Prostate gland (tissue), 2 donors: ENCODE measurements at regions of chr6 and their contacts with region 1.

Region 1: GRCh38 chr6:42260972-42261371 is 43.3 kb upstream of the MRPS10 start:
- DNase-seq: no peak
- H3K4me3 ChIP-seq: no peak overlapping the region
- H3K27ac ChIP-seq: peak overlapping the region; percentile 6 to 62
- H3K4me1 ChIP-seq: no peaks in the 10 kb centered on the region
- H3K27me3 ChIP-seq: no peaks in the 10 kb centered on the region
- CTCF ChIP-seq: peak; percentile 39 to 64 (median 48)
- POLR2A ChIP-seq: no peak

Region 2: DNA sequence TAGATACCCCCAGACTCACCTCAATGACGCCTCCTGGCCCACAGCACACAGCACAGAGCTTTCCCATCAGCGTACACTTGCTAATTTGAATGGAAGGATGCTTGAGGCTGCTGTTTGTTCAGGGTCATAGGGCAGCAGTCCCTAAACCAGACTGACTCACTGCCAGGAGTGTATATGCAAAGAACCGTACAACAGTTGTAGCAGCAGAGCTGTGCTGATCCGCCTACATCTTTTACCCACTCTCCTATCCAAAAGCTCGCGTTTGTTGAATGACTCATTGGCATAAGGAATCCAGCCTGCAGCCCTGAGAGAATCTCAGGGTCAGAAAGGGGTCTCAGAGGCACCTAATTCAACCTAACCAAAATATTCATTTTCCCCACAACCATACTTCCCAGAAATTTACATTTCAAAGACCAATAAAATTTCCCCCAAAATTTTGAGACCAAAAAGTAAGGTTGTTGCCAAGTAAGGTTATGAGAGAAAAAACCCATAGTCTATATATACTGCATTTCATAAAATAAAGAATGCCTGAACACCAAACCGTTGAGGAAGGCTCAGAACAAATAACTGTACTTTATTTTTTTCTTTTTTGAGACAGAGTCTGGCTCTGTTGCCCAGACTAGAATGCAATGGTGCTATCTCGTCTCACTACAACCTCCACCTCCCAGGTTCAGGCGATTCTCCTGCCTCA is 284.0 kb before region 1 on chr6:
- intact Hi-C with region 1: no loop called
- DNase-seq: no peak
- H3K4me3 ChIP-seq: no peak overlapping the region
- H3K27ac ChIP-seq: no peak overlapping the region
- H3K4me1 ChIP-seq: no peaks in the 10 kb centered on the region
- H3K27me3 ChIP-seq: no peaks in the 10 kb centered on the region
- CTCF ChIP-seq: no peak
- POLR2A ChIP-seq: no peak

Region 3: DNA sequence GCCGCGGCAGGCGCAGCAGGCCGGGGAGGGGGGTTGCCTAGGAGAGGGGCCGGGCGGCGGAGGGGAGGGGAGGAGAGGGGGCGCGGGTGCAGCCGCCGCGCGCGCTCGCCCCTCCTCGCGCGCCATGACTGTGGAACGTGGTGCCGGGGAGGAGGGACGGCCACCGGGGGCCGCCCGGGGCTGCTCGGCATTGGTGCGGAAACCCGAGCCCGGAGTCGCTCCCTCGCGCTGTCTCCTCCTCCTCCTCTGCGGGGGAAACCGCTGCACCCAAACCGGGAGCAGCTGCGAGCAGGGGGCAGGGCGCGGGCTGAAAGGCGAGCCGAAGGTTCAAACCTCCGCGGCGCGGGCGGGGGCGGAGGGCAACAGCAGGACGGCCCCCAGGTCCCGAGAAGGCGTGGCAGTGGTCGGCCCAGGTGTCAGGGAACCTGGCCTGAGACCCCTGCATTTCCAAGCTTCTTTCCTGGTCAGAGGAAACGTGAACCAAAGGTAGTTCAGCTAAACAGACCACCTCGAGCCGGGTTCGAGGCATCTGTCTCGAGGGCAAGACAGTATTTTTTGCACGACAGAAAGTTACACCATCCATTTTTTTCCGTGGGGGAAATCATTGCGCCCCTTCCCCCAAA is 192.2 kb after region 1 on chr6:
- intact Hi-C with region 1: loop called (anchors 5 kb)
- DNase-seq: peak; percentile 84
- H3K4me3 ChIP-seq: peak overlapping the region; percentile 55 to 75
- H3K27ac ChIP-seq: peak overlapping the region; percentile 74 to 87
- H3K4me1 ChIP-seq: peaks cover 14% of the 10 kb centered on the region
- H3K27me3 ChIP-seq: no peaks in the 10 kb centered on the region
- CTCF ChIP-seq: no peak
- POLR2A ChIP-seq: peak; percentile 64

Region 4: GRCh38 chr6:42525206-42525605 is 264.2 kb after region 1 on chr6:
- intact Hi-C with region 1: loop called (anchors 5 kb)
- DNase-seq: no peak
- H3K4me3 ChIP-seq: no peak overlapping the region
- H3K27ac ChIP-seq: no peak overlapping the region
- H3K4me1 ChIP-seq: no peaks in the 10 kb centered on the region
- H3K27me3 ChIP-seq: no peaks in the 10 kb centered on the region
- CTCF ChIP-seq: no peak
- POLR2A ChIP-seq: no peak